Activated T-helper 2 cell treated with anti-CD3 and anti-CD28 coated beads, Interferon-gamma antibody, Interleukin-2, Interleukin-4, amounts not matched to agents 10 μg/mL and 5 μg/mL and 100 μg/mL, durations not matched to agents 14 hours and 24 hours and 36 hours (primary cell): ENCODE measurements at regions of chr6 and their contacts with region 1.

Region 1: DNA sequence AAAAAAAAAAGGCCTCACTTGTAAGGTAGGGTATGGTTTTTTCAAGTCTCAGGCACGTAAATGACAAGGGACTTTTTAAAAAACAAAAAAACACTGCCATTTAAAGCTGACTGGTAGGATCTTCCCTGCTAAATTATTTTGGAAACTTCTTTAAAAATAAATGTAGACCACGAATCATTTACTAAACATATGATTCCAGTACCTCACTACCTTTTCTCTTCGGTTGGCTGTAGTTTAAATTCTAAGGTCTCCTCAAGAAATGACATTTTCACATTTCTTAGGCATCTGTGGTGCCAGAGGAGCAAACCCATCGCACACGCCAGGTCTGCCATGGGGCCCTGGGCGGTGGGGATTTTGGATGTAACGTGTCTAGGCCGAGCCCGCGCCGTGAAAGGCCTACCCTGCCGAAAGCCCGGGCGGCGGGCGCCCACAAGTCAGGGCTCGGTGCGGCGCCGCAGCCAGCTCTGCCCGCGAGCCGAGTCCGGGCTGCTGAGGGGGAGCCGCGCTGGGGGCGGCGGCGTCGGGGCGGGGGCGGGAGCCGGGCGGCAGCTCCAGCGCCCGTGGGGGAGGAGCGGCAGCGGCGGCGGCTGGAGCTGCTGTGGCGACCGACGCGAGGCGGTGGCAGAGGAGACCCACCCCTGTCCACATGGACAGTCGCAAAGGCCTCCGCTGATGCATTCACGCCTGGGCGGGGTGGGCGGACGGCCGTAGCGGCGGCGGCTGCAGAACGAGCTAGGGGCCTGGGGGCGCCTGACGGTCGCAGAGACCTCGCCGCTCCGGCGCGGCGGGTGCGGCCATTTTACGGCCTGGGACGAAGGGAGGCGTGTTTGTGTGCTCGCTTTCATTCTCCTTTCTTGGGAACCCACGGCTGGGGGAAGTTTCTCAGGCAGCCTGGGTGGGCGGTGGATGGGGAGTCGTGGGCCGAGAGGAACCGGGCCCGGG is at the start of gene SENP6:
- DNase-seq: peak; percentile 68
- H3K4me3 Mint-ChIP-seq: peak within 1 kb of the TSS; percentile 99
- H3K27ac Mint-ChIP-seq: peak within 1 kb of the TSS; percentile 99
- H3K4me1 Mint-ChIP-seq: peaks cover 38% of the 10 kb centered on the region
- H3K27me3 Mint-ChIP-seq: no peaks in the 10 kb centered on the region
- total RNA-seq, gene SENP6: 73.8 and 81.7 TPM in 2 replicates

Region 2: GRCh38 chr6:75243333-75244062 is 358.1 kb before region 1 on chr6 and contains the start of gene COX7A2:
- intact Hi-C with region 1: loop called (anchors 1 kb)
- DNase-seq: peak; percentile 85
- H3K4me3 Mint-ChIP-seq: peak within 1 kb of the TSS; percentile 97
- H3K27ac Mint-ChIP-seq: peak within 1 kb of the TSS; percentile 97
- H3K4me1 Mint-ChIP-seq: peaks cover 18% of the 10 kb centered on the region
- H3K27me3 Mint-ChIP-seq: peaks cover 12% of the 10 kb centered on the region
- total RNA-seq, gene COX7A2: 529 and 542 TPM in 2 replicates

Region 3: DNA sequence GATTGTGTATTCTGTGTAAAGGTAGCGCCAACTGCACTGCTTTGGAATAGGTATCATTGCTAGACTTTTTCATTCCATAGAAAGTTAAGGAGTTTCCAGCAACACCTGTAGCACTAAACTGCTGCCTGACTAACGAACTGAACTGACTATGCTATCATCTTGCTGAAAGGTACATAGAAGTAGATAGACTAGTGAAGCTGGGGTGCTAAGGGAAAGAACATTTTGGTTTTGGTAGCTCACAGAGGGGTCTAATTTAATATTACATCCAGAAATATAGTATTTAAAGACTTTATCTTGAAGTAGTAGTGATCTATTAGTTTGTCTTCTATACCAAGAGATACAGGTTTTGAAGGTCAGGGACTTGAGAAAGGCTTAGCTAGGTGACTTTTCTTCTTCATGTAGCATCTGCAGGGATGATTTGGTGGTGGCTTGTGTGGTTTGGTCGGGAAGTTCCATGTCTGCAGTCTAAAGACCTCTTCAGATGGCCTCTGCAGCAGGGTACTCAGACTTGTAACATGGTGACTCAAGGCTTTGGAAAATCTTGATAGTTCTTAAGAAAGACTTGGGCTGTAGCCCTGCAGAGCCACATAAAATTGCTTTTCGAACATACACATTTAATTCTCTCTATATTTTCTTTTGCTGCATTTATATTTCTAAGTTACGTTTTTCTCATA is 10.3 kb after region 1 on chr6:
- intact Hi-C with region 1: loop called (anchors 1 kb)
- DNase-seq: no peak
- H3K4me3 Mint-ChIP-seq: peak overlapping the region; percentile 7
- H3K27ac Mint-ChIP-seq: peak overlapping the region; percentile 81
- H3K4me1 Mint-ChIP-seq: peaks cover 62% of the 10 kb centered on the region
- H3K27me3 Mint-ChIP-seq: no peaks in the 10 kb centered on the region

Region 4: DNA sequence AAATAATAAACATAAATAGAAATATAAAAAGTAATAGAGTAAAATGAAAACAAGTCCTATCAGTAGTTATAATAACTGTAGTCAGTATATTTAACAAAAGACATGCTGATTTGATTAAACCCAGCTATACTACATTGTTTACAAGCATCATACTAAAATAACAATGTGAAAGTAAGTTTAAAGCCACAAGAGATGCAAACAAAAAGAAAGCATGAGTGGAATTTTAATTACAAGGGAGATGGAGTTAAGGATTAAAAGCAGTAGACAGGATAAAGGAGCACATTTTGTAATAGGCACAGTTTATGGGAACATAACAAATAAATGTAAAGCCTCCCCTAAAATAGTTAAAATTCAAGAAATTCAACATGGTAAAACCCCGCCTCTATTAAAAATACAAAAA is 41.6 kb after region 1 on chr6:
- intact Hi-C with region 1: loop called (anchors 5 kb)
- DNase-seq: no peak
- H3K4me3 Mint-ChIP-seq: no peak overlapping the region
- H3K27ac Mint-ChIP-seq: no peak overlapping the region
- H3K4me1 Mint-ChIP-seq: no peaks in the 10 kb centered on the region
- H3K27me3 Mint-ChIP-seq: no peaks in the 10 kb centered on the region